Right ventricle myocardium inferior (tissue), 1 donor: ENCODE measurements at regions of chr18 and their contacts with region 1.

Region 1: GRCh38 chr18:55110436-55110835 is 151.2 kb upstream of the CCDC68 start:
- DNase-seq: no peak
- ATAC-seq: peak; percentile 57

Region 2: DNA sequence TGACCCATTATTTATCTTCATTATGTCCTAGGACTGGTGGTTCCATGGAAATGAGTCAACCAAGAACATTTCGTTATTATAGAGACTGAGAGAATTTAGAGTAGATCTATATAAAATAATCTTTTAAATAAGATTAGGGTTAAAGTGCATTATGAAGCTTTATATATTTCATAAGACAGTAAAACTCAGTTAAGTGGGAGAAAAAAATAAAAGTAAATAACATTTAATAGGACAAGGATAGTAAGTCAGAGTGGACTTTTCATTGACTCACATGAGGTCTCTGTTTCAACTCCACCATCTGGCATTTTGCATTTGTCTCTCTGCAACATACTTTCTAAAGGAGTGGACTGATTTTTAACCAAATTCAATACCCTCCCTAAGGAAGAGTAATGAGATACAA is 25.9 kb before region 1 on chr18:
- intact Hi-C with region 1: loop called (anchors 1 kb)
- DNase-seq: no peak
- ATAC-seq: no peak

Region 3: DNA sequence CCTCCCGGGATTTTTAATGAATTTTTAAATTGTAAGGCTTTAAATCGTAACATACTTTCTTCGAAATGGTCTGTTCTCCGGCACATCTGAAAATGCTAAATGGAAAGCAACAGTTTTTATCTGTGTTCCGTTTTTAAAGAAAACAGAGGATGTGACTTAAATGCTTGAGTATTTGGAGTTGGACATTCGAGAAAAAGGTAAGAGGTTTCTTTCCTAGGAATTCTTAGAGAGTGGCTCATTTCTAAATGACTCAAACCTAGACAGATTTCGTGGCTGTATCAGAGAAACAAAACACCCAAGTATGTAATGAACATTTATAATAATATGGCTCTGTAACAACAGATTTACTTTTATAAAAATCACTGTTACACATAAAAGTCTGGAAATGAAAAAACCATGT is 26.4 kb after region 1 on chr18:
- intact Hi-C with region 1: no loop called
- DNase-seq: no peak
- ATAC-seq: no peak

Region 4: GRCh38 chr18:55220523-55220922 is 110.1 kb after region 1 on chr18:
- intact Hi-C with region 1: loop called (anchors 5 kb)
- DNase-seq: no peak
- ATAC-seq: peak; percentile 31

Region 5: GRCh38 chr18:55337908-55338521 is 227.6 kb after region 1 on chr18:
- intact Hi-C with region 1: loop called (anchors 10 kb)
- DNase-seq: no peak
- ATAC-seq: peak; percentile 79